ENCODE measurements at regions of chr12 and their contacts with region 1.

Region 1: GRCh38 chr12:1605129-1606020 is 11.0 kb upstream of the FBXL14 start:
- DNase-seq: peak; percentile 74
- ATAC-seq: peak; percentile 76
- H3K4me3 Mint-ChIP-seq: peak overlapping the region; percentile 72
- H3K27ac Mint-ChIP-seq: peak overlapping the region; percentile 29
- H3K4me1 Mint-ChIP-seq: peaks cover 45% of the 10 kb centered on the region
- H3K27me3 Mint-ChIP-seq: peaks cover 8% of the 10 kb centered on the region

Region 2: GRCh38 chr12:1473418-1473817 is 132.0 kb before region 1 on chr12:
- CTCF ChIA-PET with region 1: no interaction called
- POLR2A ChIA-PET with region 1: no interaction called
- DNase-seq: peak; percentile 71
- ATAC-seq: peak; percentile 80
- H3K4me3 Mint-ChIP-seq: peak overlapping the region; percentile 36
- H3K27ac Mint-ChIP-seq: no peak overlapping the region
- H3K4me1 Mint-ChIP-seq: no peaks in the 10 kb centered on the region
- H3K27me3 Mint-ChIP-seq: no peaks in the 10 kb centered on the region

Region 3: DNA sequence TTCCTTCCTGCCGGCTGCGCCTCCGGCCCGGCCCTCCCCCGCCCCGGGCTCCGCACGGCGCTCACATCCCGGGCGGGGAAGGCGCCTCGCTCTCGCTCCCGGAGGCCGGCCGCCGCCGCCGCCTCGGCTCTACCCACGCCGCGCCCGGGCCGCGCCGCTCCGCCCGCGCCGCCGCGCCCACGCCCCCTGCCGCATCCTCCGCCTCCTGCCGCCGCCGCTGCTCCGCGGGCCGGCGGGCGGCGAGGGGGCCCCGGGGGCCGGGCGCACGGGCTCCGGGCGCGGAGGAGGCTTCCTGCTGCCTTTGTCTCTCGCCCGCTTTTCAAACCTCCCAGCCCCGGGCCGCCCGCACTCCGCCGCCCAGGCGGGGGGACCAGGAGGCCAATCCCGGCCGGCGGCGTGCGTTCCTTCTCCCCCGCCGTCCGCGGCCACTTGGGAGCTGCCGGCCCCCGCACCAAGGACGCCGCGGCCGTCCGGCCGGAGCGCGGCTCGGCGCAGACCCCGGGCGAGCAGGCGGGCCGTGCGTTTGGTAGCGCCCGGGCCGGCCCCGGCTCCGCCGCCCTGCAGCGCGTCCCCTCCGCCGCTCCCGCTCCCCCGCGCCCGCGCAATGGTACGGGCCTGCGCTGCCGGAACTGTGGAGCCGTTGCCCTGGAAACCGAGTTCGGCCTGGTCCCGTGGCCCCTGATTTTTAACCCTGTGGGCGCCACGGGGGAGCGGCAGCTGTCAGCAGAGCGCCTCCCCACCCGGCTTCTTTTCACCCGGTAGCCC is 10.9 kb before region 1 on chr12 and contains the start of gene FBXL14:
- CTCF ChIA-PET with region 1: interaction called, 40 read pairs
- POLR2A ChIA-PET with region 1: interaction called, 39 read pairs
- DNase-seq: peak; percentile 94
- ATAC-seq: peak; percentile 75
- H3K4me3 Mint-ChIP-seq: peak within 1 kb of the TSS; percentile 95
- H3K27ac Mint-ChIP-seq: peak within 1 kb of the TSS; percentile 98
- H3K4me1 Mint-ChIP-seq: peaks cover 45% of the 10 kb centered on the region
- H3K27me3 Mint-ChIP-seq: no peaks in the 10 kb centered on the region
- total RNA-seq, gene FBXL14: 27.5 to 28.9 TPM

Region 4: DNA sequence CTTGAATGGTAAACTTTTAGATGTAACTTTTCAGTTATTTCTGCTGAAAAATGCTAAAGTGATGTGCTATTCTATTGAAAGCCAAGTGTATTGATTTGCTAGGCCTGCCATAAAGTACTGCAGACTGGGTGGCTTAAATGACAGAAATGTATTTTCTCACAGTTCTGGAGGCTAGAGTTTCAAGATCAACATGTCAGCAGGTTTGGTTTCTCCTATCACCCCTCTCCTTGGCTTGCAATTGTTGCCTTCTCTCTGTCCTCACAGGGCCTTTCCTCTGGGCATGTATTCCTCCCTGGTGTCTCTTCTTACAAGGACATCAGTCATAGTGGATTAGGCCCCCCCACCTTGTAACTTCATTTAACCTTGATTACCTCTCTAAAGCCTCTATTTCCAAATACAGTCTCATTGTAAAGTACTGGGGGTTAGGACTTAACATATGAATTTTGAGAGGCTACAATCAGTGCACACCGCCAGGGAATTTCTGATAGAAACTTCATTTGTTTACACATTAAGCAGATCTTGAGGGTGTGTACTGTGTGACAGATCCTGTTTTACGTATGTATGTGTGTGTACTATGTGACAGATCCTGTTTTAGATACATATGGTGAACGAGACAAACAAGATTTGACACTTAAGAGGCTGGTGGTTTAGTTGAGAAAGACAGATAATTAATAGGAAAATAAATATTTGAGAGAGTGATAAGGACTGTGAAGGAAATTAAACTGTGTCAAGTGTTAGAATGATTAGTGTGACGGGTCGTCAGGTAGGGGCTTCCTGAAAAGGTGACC is 135.0 kb after region 1 on chr12:
- CTCF ChIA-PET with region 1: no interaction called
- POLR2A ChIA-PET with region 1: no interaction called
- DNase-seq: no peak
- ATAC-seq: no peak
- H3K4me3 Mint-ChIP-seq: no peak overlapping the region
- H3K27ac Mint-ChIP-seq: no peak overlapping the region
- H3K4me1 Mint-ChIP-seq: peaks cover 4% of the 10 kb centered on the region
- H3K27me3 Mint-ChIP-seq: no peaks in the 10 kb centered on the region

Measured in activated CD8-positive, alpha-beta T cell treated with anti-CD3 and anti-CD28 coated beads, Interleukin-2, amount 10 ng/mL, durations not matched to agents 7 days and 5 days (primary cell).